A673 (cell line): ENCODE measurements at regions of chr14 and their contacts with region 1.

Region 1: GRCh38 chr14:35533357-35534207 is at the start of gene INSM2:
- DNase-seq: peak; percentile 86
- H3K4me3 ChIP-seq: peak within 1 kb of the TSS; percentile 56
- H3K27ac ChIP-seq: no peak within 1 kb of the TSS
- H3K4me1 ChIP-seq: peaks cover 13% of the 10 kb centered on the region
- H3K27me3 ChIP-seq: peaks cover 65% of the 10 kb centered on the region
- CTCF ChIP-seq: no peak
- total RNA-seq, gene INSM2: not detected in 2 replicates

Region 2: DNA sequence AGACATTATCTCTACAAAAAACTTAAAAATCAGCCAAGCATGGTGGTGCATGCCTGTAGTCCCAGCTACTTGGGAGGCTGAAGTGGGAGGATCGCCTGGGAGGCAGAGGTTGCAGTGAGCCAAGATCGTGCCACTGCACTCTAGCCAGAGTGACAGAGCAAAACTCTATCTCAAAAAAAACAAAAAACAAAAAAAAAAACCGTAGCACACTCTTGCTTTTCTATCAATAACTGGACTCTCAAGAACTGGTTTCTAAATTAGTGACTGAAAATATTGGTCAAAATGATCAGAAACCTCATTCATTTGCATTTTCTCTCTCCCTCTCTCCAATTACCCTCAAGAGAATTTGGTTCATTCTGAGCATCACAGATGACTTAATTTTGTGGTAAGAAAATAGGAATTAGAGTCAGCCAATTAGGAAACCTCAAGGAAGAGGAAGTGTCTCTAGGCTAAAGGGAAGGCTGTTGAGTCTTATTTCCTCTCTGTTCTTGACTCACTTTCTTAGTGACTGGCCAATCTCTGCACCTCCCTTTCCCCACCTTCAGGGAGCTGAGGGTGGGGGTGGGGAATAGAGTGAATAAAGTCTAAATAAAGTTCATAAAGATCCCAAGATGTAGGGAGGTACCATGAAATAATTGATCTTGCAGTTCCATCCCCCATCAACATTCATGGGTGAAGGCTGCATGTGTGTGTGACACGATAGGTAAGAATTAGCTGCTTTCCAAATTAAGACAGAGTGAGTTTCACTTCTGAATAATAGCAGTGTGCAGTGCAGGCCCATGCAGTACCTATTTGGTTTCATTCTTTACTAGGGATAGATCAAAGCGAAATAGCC is 248.2 kb before region 1 on chr14:
- CTCF ChIA-PET with region 1: no interaction called
- POLR2A ChIA-PET with region 1: no interaction called
- intact Hi-C with region 1: no loop called
- DNase-seq: no peak
- H3K4me3 ChIP-seq: no peak overlapping the region
- H3K27ac ChIP-seq: no peak overlapping the region
- H3K4me1 ChIP-seq: no peaks in the 10 kb centered on the region
- H3K27me3 ChIP-seq: no peaks in the 10 kb centered on the region
- CTCF ChIP-seq: no peak

Region 3: GRCh38 chr14:35470755-35471154 is 62.8 kb before region 1 on chr14:
- CTCF ChIA-PET with region 1: no interaction called
- POLR2A ChIA-PET with region 1: no interaction called
- intact Hi-C with region 1: no loop called
- DNase-seq: peak; percentile 26
- H3K4me3 ChIP-seq: no peak overlapping the region
- H3K27ac ChIP-seq: no peak overlapping the region
- H3K4me1 ChIP-seq: no peaks in the 10 kb centered on the region
- H3K27me3 ChIP-seq: peaks cover 25% of the 10 kb centered on the region
- CTCF ChIP-seq: no peak

Region 4: DNA sequence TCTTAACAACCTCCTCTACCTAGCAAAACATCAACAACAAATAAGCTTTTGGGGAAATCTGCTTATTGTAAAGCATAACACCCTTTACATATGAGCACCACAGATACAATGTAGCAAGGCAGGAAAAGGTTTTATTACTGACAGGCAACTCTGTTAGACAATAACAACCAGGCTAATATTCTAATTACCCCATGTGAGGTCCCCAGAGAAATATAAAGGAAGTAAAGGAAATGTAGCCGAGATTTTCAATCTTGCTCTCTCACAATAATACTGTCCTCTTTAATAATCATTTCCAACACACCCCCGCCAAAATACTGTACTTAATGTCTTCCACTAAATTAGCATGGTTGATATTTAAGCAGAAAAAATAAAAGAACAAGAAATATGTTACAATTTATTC is 13.6 kb before region 1 on chr14:
- CTCF ChIA-PET with region 1: interaction called, 14 read pairs
- POLR2A ChIA-PET with region 1: no interaction called
- intact Hi-C with region 1: no loop called
- DNase-seq: peak; percentile 69
- H3K4me3 ChIP-seq: no peak overlapping the region
- H3K27ac ChIP-seq: no peak overlapping the region
- H3K4me1 ChIP-seq: peaks cover 7% of the 10 kb centered on the region
- H3K27me3 ChIP-seq: no peaks in the 10 kb centered on the region
- CTCF ChIP-seq: no peak

Region 5: DNA sequence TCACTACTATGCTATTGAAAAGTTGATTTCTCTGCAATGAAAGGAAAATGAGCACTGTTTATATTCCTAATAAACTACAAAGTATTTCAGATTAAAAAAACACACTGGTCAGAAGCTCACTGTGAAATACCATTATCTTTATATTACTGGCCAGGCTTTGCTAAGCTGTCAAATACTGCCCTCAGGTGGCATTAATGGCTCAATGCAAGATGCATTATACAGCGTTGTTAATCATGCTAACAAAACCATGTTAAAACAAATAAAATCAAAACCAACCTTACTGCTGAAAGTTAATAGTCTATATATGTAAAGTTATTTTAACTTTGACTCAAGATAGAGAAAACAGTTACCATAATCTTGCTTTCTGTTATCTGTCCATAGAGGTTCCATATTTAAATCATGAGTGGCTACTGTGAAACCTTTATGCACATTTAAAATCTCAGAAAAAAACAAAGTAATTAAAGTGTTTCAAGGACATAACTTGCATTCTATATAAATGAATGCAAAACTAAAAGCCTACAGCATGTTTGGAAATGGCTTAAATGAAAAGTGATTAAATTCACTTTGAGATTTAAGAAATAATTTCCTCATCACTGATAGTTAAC is 153.9 kb after region 1 on chr14:
- CTCF ChIA-PET with region 1: no interaction called
- POLR2A ChIA-PET with region 1: no interaction called
- intact Hi-C with region 1: loop called (anchors 5 kb)
- DNase-seq: peak; percentile 70
- H3K4me3 ChIP-seq: no peak overlapping the region
- H3K27ac ChIP-seq: no peak overlapping the region
- H3K4me1 ChIP-seq: peaks cover under 1% of the 10 kb centered on the region
- H3K27me3 ChIP-seq: no peaks in the 10 kb centered on the region
- CTCF ChIP-seq: peak; percentile 92

Region 6: GRCh38 chr14:35814371-35815005 is 280.9 kb after region 1 on chr14:
- CTCF ChIA-PET with region 1: no interaction called
- POLR2A ChIA-PET with region 1: no interaction called
- intact Hi-C with region 1: loop called (anchors 10 kb)
- DNase-seq: peak; percentile 83
- H3K4me3 ChIP-seq: no peak overlapping the region
- H3K27ac ChIP-seq: no peak overlapping the region
- H3K4me1 ChIP-seq: no peaks in the 10 kb centered on the region
- H3K27me3 ChIP-seq: no peaks in the 10 kb centered on the region
- CTCF ChIP-seq: peak; percentile 80